Heart right ventricle (tissue), 16 donors: ENCODE measurements at regions of chr16 and their contacts with region 1.

Region 1: GRCh38 chr16:73636196-73636595 is 588.3 kb upstream of the ZFHX3 start:
- DNase-seq: no peak
- ATAC-seq: no peak
- H3K4me3 ChIP-seq: no peak overlapping the region
- H3K27ac ChIP-seq: no peak overlapping the region
- H3K4me1 ChIP-seq: peaks cover 0 to 7% (median 0%) of the 10 kb centered on the region in 9 donors
- H3K27me3 ChIP-seq: no peaks in the 10 kb centered on the region
- CTCF ChIP-seq: no peak

Region 2: DNA sequence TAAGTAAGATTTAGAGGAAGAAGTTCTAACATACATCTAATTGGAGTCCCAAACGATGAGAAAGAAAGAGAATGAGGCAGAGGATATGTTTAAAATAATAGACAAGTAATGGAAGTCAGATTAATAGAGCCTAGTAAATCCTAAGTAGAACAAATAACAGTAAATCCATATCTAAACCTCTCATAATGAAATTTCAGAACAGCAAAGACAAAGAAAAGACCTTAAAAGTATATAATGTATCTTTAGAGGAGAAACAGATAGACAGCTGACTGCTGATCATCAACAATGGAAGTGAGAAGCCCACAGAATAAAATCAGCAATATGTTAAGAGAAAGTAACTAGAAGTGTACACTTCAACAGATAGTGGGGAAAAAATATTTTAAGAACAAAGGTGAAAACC is 52.0 kb before region 1 on chr16:
- intact Hi-C with region 1: loop called in 1 of 10 experiments (anchors 10 kb)
- DNase-seq: no peak
- ATAC-seq: no peak
- H3K4me3 ChIP-seq: no peak overlapping the region
- H3K27ac ChIP-seq: no peak overlapping the region
- H3K4me1 ChIP-seq: no peaks in the 10 kb centered on the region
- H3K27me3 ChIP-seq: no peaks in the 10 kb centered on the region
- CTCF ChIP-seq: no peak

Region 3: GRCh38 chr16:73670836-73671820 is 34.9 kb after region 1 on chr16:
- intact Hi-C with region 1: no loop called
- DNase-seq: no peak
- ATAC-seq: no peak
- H3K4me3 ChIP-seq: no peak overlapping the region
- H3K27ac ChIP-seq: no peak overlapping the region
- H3K4me1 ChIP-seq: no peaks in the 10 kb centered on the region
- H3K27me3 ChIP-seq: peaks cover 0 to 3% (median 0%) of the 10 kb centered on the region in 7 donors
- CTCF ChIP-seq: no peak